BJ (cell line): ENCODE measurements at regions of chr11 and their contacts with region 1.

Region 1: DNA sequence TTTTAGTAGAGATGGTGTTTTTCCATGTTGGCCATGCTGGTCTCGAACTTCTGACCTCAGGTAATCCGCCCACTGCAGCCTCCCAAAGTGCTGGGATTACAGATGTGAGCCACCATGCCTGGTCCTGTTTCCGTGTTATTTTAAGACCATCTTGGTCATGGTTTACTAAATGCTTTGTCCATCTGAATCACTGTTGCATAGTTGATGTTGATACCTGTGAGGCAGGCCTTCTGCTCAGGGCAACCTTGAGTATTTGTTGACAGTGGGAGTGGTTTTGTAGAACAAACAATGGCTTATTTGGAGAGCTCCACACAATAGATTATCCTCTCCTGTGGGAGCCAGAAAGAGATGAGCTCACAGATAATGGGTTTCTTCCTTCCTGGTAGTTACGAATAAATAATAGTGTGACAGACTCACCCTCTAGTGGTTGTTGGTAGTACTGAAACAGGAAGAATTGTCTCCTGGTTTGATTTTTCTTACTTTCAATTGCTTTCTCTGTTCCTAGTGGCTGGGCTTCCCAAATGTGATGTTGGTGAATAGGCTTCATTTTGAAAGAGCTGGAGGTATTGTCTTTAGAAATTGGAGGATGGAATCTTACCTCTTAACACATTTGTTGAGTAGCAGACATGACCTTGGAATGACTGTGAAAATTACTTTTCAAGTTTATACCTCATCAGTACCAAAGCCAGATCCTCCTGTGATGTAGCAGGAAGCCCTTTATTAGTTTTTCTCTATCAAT is 39.0 kb downstream of the CTNND1 start:
- DNase-seq: peak; percentile 39
- H3K4me3 ChIP-seq: no peak overlapping the region
- H3K27me3 ChIP-seq: no peaks in the 10 kb centered on the region
- CTCF ChIP-seq: peak; percentile 72

Region 2: GRCh38 chr11:57745206-57745605 is 55.4 kb before region 1 on chr11:
- CTCF ChIA-PET with region 1: interaction called, 43 read pairs
- POLR2A ChIA-PET with region 1: no interaction called
- DNase-seq: no peak
- H3K4me3 ChIP-seq: no peak overlapping the region
- H3K27me3 ChIP-seq: no peaks in the 10 kb centered on the region
- CTCF ChIP-seq: no peak

Region 3: DNA sequence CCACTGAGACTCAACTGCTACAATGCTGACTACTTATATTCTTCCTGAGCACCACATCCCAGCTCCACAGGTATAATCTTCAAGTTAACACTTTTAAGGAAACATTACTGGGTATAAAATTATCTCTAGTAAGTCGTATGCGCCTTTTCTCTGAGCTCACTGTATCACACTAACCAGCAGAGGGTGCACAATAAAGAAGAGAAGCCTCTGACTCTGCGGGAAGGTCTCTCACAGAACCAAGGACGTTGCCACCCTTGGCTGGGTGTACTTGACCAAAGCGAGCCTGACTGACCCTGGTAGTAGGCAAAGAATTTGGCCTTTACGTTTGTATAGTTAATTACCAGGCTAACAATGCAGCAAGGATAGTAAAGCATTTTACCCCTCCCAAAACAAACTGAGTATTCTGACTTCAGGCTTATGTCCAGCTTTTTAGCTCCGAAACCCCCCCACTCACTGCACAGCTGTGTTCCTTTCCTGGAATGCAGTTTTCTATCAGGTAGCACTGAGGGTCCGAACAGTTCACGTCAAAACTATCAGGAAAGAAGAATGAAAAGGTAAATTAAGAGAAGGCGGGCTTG is 48.8 kb before region 1 on chr11 and contains the start of gene BTBD18:
- CTCF ChIA-PET with region 1: interaction called, 137 read pairs
- POLR2A ChIA-PET with region 1: interaction called, 3 read pairs
- DNase-seq: no peak
- H3K4me3 ChIP-seq: no peak within 1 kb of the TSS
- H3K27me3 ChIP-seq: no peaks in the 10 kb centered on the region
- CTCF ChIP-seq: peak; percentile 60
- polyA plus RNA-seq, gene BTBD18: not detected in 2 replicates

Region 4: DNA sequence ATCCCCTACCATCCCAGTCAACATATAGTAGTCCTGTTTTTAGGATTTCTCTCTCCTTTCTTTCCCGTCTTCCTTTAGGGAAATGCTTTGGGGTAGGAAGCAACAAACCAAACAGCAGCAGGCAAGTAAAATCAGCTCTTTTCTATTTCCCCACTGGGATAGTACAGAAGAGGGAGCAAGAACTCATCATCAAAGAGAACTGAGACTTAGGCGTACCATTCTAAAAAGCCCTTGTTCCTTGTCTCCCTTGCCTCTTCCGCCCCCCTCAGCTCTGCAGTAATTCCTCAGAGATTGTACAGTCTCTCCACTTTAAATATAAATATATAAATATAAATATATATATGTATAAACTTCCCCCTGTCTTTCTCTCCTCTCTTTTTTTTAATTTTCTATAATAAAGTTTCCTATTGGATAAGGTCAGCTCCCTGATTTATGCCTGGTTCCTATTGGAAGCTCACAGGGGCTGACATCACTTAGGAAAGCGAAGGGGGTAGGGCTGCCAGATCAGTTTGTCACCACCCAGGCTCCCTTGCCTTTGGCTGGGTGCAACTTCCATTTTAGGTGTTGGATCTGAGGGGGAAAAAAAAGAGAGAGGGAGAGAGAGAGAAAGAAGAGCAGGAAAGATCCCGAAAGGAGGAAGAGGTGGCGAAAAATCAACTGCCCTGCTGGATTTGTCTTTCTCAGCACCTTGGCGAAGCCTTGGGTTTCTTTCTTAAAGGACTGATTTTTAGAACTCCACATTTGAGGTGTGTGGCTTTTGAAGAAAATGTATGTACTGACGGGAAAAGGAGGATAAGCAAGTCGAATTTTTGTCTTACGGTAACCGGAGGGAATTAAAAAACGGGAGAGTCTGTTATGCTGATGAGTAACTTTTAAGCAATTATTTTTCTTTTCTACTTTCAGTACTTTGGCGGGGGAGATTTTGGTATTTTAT is 39.0 kb before region 1 on chr11 and contains the start of gene CTNND1:
- CTCF ChIA-PET with region 1: interaction called, 137 read pairs
- POLR2A ChIA-PET with region 1: interaction called, 5 read pairs
- DNase-seq: peak; percentile 85
- H3K4me3 ChIP-seq: peak within 1 kb of the TSS; percentile 79
- H3K27me3 ChIP-seq: no peaks in the 10 kb centered on the region
- CTCF ChIP-seq: no peak
- polyA plus RNA-seq, gene CTNND1: 145 and 286 TPM in 2 replicates

Region 5: GRCh38 chr11:57787920-57788702 is 12.5 kb before region 1 on chr11:
- CTCF ChIA-PET with region 1: interaction called, 19 read pairs
- POLR2A ChIA-PET with region 1: no interaction called
- DNase-seq: no peak
- H3K4me3 ChIP-seq: no peak overlapping the region
- H3K27me3 ChIP-seq: no peaks in the 10 kb centered on the region
- CTCF ChIP-seq: no peak

Region 6: GRCh38 chr11:57815476-57815875 is 14.9 kb after region 1 on chr11:
- CTCF ChIA-PET with region 1: interaction called, 11 read pairs
- POLR2A ChIA-PET with region 1: no interaction called
- DNase-seq: no peak
- H3K4me3 ChIP-seq: no peak overlapping the region
- H3K27me3 ChIP-seq: no peaks in the 10 kb centered on the region
- CTCF ChIP-seq: no peak